A673 (cell line): ENCODE measurements at regions of chrX and their contacts with region 1.

Region 1: GRCh38 chrX:3119376-3119775 is 78.1 kb downstream of the ARSF start:
- DNase-seq: no peak
- H3K4me3 ChIP-seq: no peak overlapping the region
- H3K27ac ChIP-seq: no peak overlapping the region
- H3K4me1 ChIP-seq: no peaks in the 10 kb centered on the region
- H3K27me3 ChIP-seq: no peaks in the 10 kb centered on the region
- CTCF ChIP-seq: no peak

Region 2: DNA sequence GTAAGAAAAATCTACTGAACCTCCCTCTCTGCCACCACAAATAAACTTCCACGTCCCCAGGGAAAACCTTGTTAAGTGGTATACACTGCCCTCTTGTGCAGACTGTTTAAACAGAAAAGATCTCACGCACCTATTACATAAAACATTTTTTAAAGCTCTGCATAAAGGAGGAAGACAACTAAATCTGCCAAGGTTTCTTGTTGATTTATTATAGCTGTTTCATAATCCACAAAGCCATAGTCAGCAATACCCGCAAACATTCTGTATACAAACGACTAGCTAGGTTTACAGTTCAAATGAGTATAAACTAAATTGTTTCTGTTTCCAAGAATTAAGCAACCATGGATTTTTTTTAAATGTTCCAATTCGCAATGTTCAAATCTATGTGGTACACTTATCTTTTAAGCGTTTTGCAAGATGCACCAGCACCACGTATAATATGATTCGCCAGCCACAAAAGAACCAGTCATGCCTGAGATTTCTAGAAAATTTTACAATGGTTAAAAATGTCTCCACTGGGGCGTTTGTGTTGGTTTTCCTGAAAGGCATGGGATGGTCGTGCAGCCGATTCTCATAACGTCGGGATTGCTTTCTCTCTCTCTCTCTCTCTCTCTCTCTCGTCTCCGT is 429.5 kb after region 1 on chrX:
- CTCF ChIA-PET with region 1: no interaction called
- POLR2A ChIA-PET with region 1: no interaction called
- intact Hi-C with region 1: loop called (anchors 5 kb)
- DNase-seq: peak; percentile 80
- H3K4me3 ChIP-seq: peak overlapping the region; percentile 34
- H3K27ac ChIP-seq: no peak overlapping the region
- H3K4me1 ChIP-seq: no peaks in the 10 kb centered on the region
- H3K27me3 ChIP-seq: no peaks in the 10 kb centered on the region
- CTCF ChIP-seq: peak; percentile 55